ENCODE measurements at regions of chr6 and their contacts with region 1.

Region 1: DNA sequence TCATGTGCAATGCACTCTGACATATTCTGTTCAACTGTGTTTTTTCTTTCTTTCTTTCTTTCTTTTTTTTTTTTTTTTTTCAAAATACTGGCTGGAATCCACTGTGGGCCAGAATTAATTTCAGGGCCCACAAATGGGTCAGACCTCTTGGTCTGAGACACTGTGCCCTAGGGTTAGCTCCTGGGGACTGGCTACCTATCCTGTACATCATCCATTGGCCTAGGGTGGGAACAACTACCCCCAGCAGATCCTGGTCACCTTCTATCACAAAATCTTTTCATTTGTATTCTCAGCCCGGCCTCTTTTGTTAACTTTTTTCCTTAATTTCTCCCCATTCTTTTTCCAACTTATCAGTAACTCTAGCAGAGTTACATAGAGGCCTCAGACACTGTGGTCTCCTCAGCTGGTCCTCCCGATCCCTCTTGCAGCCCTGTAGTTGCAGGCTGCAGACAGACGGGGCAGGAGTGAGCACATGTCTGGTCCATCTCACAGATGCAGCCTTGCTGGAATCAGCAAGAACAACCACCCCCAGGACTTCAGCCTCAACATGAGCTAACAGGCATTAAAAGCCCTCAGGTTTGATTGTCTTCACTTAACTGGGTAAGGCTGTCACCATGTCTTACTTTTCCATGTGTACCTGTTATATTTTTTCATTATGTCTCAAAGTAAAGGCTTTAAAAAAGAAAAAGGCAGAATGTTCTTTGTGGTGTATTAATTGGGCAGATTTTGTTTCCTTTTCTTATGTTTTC is 41.3 kb downstream of the TXLNB start:
- DNase-seq: peak; percentile 65 to 71 (median 67)
- ATAC-seq: peak; percentile 59 to 92 (median 88)
- H3K4me3 ChIP-seq: no peak overlapping the region
- H3K27ac ChIP-seq: peak overlapping the region; percentile 54 to 85 (median 79)
- H3K4me1 ChIP-seq: peaks cover 4 to 37% (median 23%) of the 10 kb centered on the region in 12 donors
- H3K27me3 ChIP-seq: no peaks in the 10 kb centered on the region
- CTCF ChIP-seq: peak; percentile 52 to 80 (median 71)
- POLR2A ChIP-seq: no peak

Region 2: DNA sequence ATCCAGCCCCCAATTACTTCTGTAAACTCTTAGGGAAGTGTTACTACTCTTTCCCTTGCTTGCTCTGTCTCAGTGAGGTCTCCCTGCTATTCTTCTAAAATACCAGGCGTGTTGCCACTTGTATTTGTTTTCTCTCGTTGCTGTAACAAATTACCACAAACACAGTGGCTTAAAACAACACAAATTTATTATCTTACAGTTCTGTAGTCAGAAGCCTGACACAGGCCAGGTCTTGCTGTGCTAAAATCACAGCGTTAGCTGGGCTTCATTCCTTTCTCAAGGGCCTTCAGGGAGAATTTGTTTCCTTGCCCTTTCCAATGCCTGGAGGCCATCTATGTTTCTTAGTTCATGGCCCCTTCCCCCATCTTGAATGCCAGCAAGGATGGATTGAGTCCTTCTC is 55.7 kb before region 1 on chr6:
- intact Hi-C with region 1: no loop called
- DNase-seq: no peak
- ATAC-seq: no peak
- H3K4me3 ChIP-seq: no peak overlapping the region
- H3K27ac ChIP-seq: no peak overlapping the region
- H3K4me1 ChIP-seq: peaks cover 0 to 6% (median 0%) of the 10 kb centered on the region in 12 donors
- H3K27me3 ChIP-seq: no peaks in the 10 kb centered on the region
- CTCF ChIP-seq: no peak
- POLR2A ChIP-seq: no peak

Region 3: DNA sequence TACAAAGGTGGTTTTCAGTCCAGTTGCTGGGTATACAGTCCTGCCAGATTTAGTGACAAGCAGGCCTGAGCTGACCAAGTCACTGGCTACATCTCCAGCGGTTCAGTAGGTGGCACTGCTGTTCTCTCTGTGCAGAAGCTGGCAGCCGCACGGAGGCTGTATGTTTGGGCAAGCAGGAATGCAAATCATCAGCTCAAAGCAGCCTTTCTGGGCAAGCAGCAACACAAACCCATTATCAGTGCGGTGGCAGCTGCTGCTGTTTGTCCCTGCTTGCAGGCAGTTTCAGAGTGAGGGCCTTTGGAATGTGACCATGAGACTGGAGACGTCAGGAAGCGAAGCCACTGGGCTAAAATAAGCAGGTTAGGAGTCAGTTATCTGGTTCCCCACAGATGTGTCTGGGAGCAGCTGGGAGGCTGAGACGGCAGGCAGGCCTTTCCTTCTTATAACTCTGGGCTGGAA is 31.2 kb before region 1 on chr6:
- intact Hi-C with region 1: loop called in 1 of 10 experiments (anchors 5 kb)
- DNase-seq: peak; percentile 85 to 90 (median 86)
- ATAC-seq: peak; percentile 98 to 100 (median 99)
- H3K4me3 ChIP-seq: no peak overlapping the region
- H3K27ac ChIP-seq: peak overlapping the region; percentile 30 to 79 (median 62)
- H3K4me1 ChIP-seq: peaks cover 0 to 15% (median 6%) of the 10 kb centered on the region in 12 donors
- H3K27me3 ChIP-seq: no peaks in the 10 kb centered on the region
- CTCF ChIP-seq: peak; percentile 64 to 91 (median 82)
- POLR2A ChIP-seq: peak in 1 of 2 donors; percentile 62

Region 4: GRCh38 chr6:139334806-139335446 is 84.5 kb after region 1 on chr6:
- intact Hi-C with region 1: loop called in 1 of 10 experiments (anchors 5 kb)
- DNase-seq: peak in 1 of 5 donors; percentile 21
- ATAC-seq: peak in 3 of 4 donors; percentile 67 to 84 (median 69)
- H3K4me3 ChIP-seq: no peak overlapping the region
- H3K27ac ChIP-seq: peak overlapping the region in 11 of 12 donors; percentile 0 to 76 (median 55)
- H3K4me1 ChIP-seq: peaks cover 0 to 62% (median 7%) of the 10 kb centered on the region in 12 donors
- H3K27me3 ChIP-seq: no peaks in the 10 kb centered on the region
- CTCF ChIP-seq: no peak
- POLR2A ChIP-seq: no peak

Region 5: DNA sequence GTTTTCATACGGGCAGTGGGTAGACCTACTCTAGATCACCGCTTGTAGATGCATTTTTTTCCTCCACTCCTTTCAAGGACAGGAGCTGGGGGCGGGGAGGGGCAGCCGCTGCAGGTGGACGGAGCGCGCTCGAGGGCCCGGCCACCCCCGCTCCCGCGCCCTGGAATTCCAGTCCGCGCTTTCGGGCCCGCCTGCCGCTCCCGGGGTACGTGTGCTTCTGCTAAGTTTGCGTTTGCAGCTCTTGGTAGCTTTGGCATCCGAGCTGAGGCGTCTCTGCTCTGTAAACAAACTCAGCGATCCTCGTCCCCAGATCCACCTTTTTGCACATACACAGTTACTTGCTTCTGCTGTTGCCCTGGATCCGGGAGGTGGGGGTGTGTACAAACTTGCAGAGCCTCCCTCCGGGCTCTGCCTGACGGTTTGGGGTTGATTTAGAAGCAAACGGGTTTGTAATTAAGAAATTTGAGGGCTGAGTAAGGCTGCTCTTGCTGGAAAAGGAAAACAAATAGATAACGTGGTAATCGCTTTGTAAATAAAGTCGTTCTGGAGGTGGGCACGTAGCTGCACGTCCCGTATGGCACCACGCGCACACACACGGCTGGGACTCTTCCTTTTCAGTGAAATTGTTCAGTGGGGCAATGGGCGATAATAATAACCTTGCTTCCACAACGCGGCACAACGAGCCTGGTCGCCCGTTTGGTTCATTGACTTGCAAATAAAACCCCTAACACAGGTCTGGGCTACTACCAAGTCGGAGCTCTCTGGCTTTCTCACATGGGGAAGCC is 125.0 kb after region 1 on chr6:
- intact Hi-C with region 1: no loop called
- DNase-seq: peak; percentile 90 to 95 (median 91)
- ATAC-seq: peak; percentile 70 to 82 (median 80)
- H3K4me3 ChIP-seq: peak overlapping the region; percentile 78 to 98 (median 92)
- H3K27ac ChIP-seq: peak overlapping the region; percentile 95 to 100 (median 98)
- H3K4me1 ChIP-seq: peaks cover 0 to 30% (median 15%) of the 10 kb centered on the region in 12 donors
- H3K27me3 ChIP-seq: no peaks in the 10 kb centered on the region
- CTCF ChIP-seq: peak in 1 of 12 donors; percentile 14
- POLR2A ChIP-seq: peak in 1 of 2 donors; percentile 64